Calu3 (cell line): ENCODE measurements at regions of chr11 and their contacts with region 1.

Region 1: DNA sequence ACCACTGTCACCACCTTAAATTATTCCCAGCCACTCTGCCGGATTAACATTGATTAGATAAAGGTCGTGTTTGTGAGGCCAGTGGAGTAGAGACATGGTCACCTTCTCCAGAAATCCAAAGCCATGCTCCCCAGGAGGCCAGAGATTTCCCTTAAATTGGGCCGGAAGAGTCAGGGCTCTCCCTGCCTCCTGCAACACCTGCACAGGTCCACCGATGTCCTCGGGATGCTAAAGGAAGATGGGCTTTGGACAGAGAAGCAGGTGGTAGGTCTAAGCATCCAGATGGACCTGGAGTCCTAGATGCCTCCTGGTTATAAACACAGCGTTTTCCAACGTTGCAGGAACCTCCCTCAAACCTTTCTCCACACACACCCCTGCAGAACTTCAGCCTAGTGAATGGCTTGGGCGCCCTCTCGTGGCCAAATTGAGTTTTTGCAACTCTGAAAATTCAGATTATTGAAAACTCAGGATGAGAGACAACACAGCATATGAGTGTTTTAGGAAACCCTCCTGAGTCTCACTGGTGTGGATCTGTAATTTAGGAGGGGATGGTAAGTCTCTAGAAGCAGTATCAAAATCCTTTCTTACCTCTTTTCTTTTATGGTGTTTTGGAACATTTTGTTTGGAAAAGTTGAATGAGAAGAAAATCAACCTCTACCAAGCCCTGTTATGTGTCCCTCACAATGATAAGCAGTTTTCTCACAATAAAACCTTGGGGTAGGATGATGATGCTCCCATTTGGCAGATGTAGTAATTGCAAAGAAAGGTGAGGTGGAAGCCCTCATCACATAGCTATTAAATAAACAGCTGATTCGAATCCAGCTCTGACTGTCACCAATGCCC is 109.6 kb downstream of the RRAS2 start:
- DNase-seq: peak; percentile 54
- H3K4me3 Mint-ChIP-seq: no peak overlapping the region
- H3K27ac Mint-ChIP-seq: no peak overlapping the region
- H3K4me1 Mint-ChIP-seq: peaks cover 1% of the 10 kb centered on the region
- H3K27me3 Mint-ChIP-seq: peaks cover 31% of the 10 kb centered on the region
- CTCF ChIP-seq: peak; percentile 77

Region 2: GRCh38 chr11:13955971-13956421 is 293.3 kb before region 1 on chr11:
- CTCF ChIA-PET with region 1: no interaction called
- intact Hi-C with region 1: loop called (anchors 1 kb)
- DNase-seq: peak; percentile 43
- H3K4me3 Mint-ChIP-seq: no peak overlapping the region
- H3K27ac Mint-ChIP-seq: no peak overlapping the region
- H3K4me1 Mint-ChIP-seq: no peaks in the 10 kb centered on the region
- H3K27me3 Mint-ChIP-seq: no peaks in the 10 kb centered on the region
- CTCF ChIP-seq: peak; percentile 73

Region 3: GRCh38 chr11:13963949-13964770 is 285.2 kb before region 1 on chr11:
- CTCF ChIA-PET with region 1: no interaction called
- intact Hi-C with region 1: loop called (anchors 2 kb)
- DNase-seq: peak; percentile 14
- H3K4me3 Mint-ChIP-seq: peak overlapping the region; percentile 61
- H3K27ac Mint-ChIP-seq: no peak overlapping the region
- H3K4me1 Mint-ChIP-seq: peaks cover 22% of the 10 kb centered on the region
- H3K27me3 Mint-ChIP-seq: peaks cover 37% of the 10 kb centered on the region
- CTCF ChIP-seq: no peak

Region 4: DNA sequence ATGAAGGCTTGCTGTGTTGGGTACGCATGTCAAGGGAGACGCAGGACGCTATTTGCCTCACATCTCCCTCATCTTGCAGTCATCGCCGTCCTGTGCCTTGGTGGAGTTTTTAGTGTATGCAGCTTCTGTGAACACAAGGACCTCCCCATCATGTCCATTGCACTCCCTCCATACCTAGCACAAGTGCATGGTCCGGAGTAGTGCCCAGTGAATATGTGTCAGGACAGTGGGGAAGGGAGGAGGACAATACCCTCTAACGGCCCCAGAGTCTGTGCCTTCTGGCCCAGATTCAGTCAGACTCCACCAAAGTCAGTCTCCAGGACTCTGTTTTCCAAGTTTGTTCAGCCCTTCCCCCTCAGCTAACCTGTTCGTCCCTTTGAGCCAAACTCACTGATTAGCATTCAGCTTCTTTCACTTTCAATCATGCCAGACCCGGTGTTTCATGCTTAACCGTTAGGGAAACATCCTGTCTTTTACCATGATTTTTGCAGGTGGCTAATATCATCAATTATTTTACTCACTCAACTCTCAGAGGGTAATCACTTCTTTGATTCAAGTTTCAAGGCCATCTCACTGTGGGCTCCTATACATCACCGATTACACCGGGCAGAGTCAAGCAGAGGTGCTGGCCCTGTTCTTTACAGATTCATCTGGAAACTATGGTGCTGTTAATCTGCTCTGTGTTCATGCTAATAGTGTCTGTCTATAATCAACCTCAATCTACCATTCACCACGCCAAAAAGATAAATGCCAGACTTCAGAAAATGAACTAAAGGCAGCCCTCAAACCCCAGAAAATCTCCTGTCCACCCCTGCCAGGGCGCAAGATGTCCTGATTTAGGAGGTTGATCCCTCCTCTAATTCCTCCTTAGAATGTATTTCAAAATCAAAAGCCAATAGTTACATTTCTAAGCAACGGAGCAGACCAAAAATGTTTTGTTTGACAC is 46.8 kb before region 1 on chr11:
- CTCF ChIA-PET with region 1: no interaction called
- intact Hi-C with region 1: no loop called
- DNase-seq: no peak
- H3K4me3 Mint-ChIP-seq: no peak overlapping the region
- H3K27ac Mint-ChIP-seq: no peak overlapping the region
- H3K4me1 Mint-ChIP-seq: no peaks in the 10 kb centered on the region
- H3K27me3 Mint-ChIP-seq: peaks cover 31% of the 10 kb centered on the region
- CTCF ChIP-seq: no peak